HepG2 (cell line): ENCODE measurements at regions of chr20 and their contacts with region 1.

Region 1: GRCh38 chr20:50189681-50190582 is 698 bp upstream of the CEBPB start:
- DNase-seq: peak; percentile 90
- ATAC-seq: peak; percentile 53
- H3K4me3 ChIP-seq: peak overlapping the region; percentile 80 to 99 (median 95)
- H3K27ac ChIP-seq: peak overlapping the region; percentile 79
- H3K4me1 ChIP-seq: peaks cover 66% of the 10 kb centered on the region
- H3K27me3 ChIP-seq: no peaks in the 10 kb centered on the region; a peak in 1 of 5 replicates
- CTCF ChIP-seq: peak; percentile 96
- EP300 ChIP-seq: peak in 1 of 2 experiments; percentile 31; a peak in 1 of 4 replicates
- POLR2A ChIP-seq: no peak
- RAD21 ChIP-seq: peak; percentile 96

Region 2: GRCh38 chr20:50101281-50101680 is 88.7 kb before region 1 on chr20:
- CTCF ChIA-PET with region 1: no interaction called
- POLR2A ChIA-PET with region 1: no interaction called
- in situ Hi-C with region 1: no loop called
- intact Hi-C with region 1: no loop called
- DNase-seq: no peak
- ATAC-seq: peak; percentile 38; the same call in 2 of the 3 replicates
- H3K4me3 ChIP-seq: no peak overlapping the region
- H3K27ac ChIP-seq: no peak overlapping the region
- H3K4me1 ChIP-seq: peaks cover 34% of the 10 kb centered on the region
- H3K27me3 ChIP-seq: no peaks in the 10 kb centered on the region
- CTCF ChIP-seq: no peak
- EP300 ChIP-seq: no peak
- POLR2A ChIP-seq: no peak
- RAD21 ChIP-seq: no peak

Region 3: DNA sequence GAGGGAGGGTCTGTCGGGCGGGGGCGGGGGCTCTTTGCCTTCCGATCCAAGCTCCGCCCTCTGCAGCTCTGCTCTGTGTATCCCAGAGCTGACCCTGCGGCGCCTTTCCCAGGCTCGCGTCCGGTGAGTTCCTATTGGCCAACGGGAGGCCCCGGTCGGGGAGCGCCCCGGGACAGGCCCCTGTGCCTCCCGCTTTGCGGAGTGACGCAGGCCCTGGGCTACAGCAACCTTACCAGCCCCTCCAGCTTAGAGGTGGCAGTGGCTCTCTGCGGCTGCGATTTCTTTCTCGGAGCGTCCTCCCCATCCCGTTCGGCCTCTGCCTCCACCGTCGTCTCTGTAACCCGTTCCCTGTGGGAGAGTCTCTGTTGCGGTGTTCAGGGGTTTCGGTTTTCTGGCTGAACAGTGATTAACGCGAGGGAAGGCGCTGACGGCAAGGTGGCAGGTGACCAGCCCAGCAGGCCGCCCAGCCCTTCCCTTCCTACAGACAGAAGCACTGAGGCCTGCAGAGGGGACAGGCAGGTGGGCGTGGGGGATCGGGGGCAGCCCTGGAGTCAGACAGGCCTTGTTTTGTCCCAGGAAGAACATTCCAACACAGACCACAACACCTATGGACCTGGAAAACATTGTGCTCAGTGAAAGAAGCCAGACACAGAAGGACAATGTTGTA is 17.5 kb before region 1 on chr20:
- CTCF ChIA-PET with region 1: no interaction called
- POLR2A ChIA-PET with region 1: interaction called, 39 read pairs
- in situ Hi-C with region 1: no loop called
- intact Hi-C with region 1: no loop called
- DNase-seq: peak; percentile 97
- ATAC-seq: peak; percentile 96
- H3K4me3 ChIP-seq: peak overlapping the region; percentile 63 to 78 (median 64)
- H3K27ac ChIP-seq: peak overlapping the region; percentile 81
- H3K4me1 ChIP-seq: peaks cover 57% of the 10 kb centered on the region
- H3K27me3 ChIP-seq: no peaks in the 10 kb centered on the region; a peak in 1 of 5 replicates
- CTCF ChIP-seq: peak; percentile 44
- EP300 ChIP-seq: peak; percentile 45 to 58; a peak in 1 of 4 replicates
- POLR2A ChIP-seq: peak; percentile 95 to 96
- RAD21 ChIP-seq: peak; percentile 48

Region 4: GRCh38 chr20:50256577-50256976 is 66.6 kb after region 1 on chr20:
- CTCF ChIA-PET with region 1: no interaction called
- POLR2A ChIA-PET with region 1: no interaction called
- in situ Hi-C with region 1: no loop called
- intact Hi-C with region 1: no loop called
- DNase-seq: no peak
- ATAC-seq: no peak
- H3K4me3 ChIP-seq: peak overlapping the region in 1 of 3 experiments; percentile 3; a peak in 1 of 6 replicates
- H3K27ac ChIP-seq: no peak overlapping the region
- H3K4me1 ChIP-seq: peaks cover 57% of the 10 kb centered on the region
- H3K27me3 ChIP-seq: peaks cover 5 to 57% of the 10 kb centered on the region in 2 experiments; a peak in 4 of 5 replicates
- CTCF ChIP-seq: peak; percentile 43
- EP300 ChIP-seq: no peak
- POLR2A ChIP-seq: no peak
- RAD21 ChIP-seq: no peak

Region 5: GRCh38 chr20:50292324-50293243 is 102.7 kb after region 1 on chr20:
- CTCF ChIA-PET with region 1: interaction called, 3 read pairs
- POLR2A ChIA-PET with region 1: interaction called, 24 read pairs
- in situ Hi-C with region 1: no loop called
- intact Hi-C with region 1: loop called (anchors 1 kb)
- DNase-seq: peak; percentile 97
- ATAC-seq: peak; percentile 69
- H3K4me3 ChIP-seq: peak overlapping the region in 1 of 3 experiments; percentile 39; a peak in 3 of 6 replicates
- H3K27ac ChIP-seq: peak overlapping the region; percentile 77
- H3K4me1 ChIP-seq: peaks cover 68% of the 10 kb centered on the region
- H3K27me3 ChIP-seq: no peaks in the 10 kb centered on the region
- CTCF ChIP-seq: peak; percentile 41
- EP300 ChIP-seq: peak; percentile 96 to 99
- POLR2A ChIP-seq: peak in 1 of 2 experiments; percentile 14; a peak in 2 of 4 replicates
- RAD21 ChIP-seq: peak; percentile 63

Region 6: DNA sequence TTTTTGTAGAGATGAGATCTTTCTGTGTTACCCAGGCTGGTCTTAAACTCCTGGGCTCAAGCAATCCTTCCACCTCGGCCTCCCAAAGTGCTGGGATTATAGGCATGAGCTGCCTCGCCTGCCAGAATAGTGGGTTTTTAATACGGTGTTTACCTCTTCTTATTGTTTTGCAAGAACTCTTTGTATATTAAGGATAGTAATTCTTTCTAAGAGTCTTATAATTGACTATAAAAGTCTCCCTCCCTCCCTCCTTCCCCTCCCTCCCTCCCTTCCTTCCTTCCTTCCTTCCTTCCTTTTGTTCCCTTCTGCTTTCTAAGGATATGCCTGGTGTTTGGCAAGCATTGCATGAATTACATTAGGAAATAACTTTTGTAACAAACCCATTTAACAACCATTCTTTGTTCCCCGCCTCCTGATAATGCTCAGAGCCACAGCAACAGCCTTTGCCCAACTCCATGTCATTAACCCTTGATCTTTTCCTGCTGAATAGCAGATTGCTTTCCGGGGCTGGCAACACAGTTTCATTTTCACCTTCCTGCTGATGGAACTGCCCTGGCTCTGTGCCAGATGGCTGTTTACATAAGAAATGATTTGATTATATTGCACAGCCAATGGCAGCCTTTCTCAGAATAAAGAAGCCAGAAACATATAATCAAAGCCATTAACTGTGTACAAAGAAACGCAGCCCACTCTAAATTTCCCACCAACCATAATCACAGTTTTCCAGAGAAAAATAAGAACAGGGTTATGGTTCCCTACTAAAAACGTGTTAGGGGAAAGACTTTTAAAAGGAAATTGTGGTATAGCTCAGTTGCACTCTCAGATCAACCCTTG is 176.6 kb after region 1 on chr20:
- CTCF ChIA-PET with region 1: no interaction called
- POLR2A ChIA-PET with region 1: interaction called, 17 read pairs
- in situ Hi-C with region 1: no loop called
- intact Hi-C with region 1: no loop called
- DNase-seq: peak; percentile 100
- ATAC-seq: peak; percentile 77
- H3K4me3 ChIP-seq: peak overlapping the region in 2 of 3 experiments; percentile 29 to 31; a peak in 2 of 6 replicates
- H3K27ac ChIP-seq: peak overlapping the region; percentile 71
- H3K4me1 ChIP-seq: peaks cover 87% of the 10 kb centered on the region
- H3K27me3 ChIP-seq: peaks cover 0 to 12% of the 10 kb centered on the region in 2 experiments; a peak in 3 of 5 replicates
- CTCF ChIP-seq: 0 out of 2 replicates have a peak, but pooled peaks have one; percentile 11
- EP300 ChIP-seq: peak; percentile 79 to 93
- POLR2A ChIP-seq: no peak
- RAD21 ChIP-seq: peak; percentile 8; the same call in 1 of the 2 replicates

Region 7: GRCh38 chr20:50425085-50425484 is 235.2 kb after region 1 on chr20:
- CTCF ChIA-PET with region 1: no interaction called
- POLR2A ChIA-PET with region 1: interaction called, 25 read pairs
- in situ Hi-C with region 1: no loop called
- intact Hi-C with region 1: no loop called
- DNase-seq: peak; percentile 61
- ATAC-seq: peak; percentile 12; the same call in 2 of the 3 replicates
- H3K4me3 ChIP-seq: no peak overlapping the region
- H3K27ac ChIP-seq: no peak overlapping the region
- H3K4me1 ChIP-seq: peaks cover 84% of the 10 kb centered on the region
- H3K27me3 ChIP-seq: no peaks in the 10 kb centered on the region
- CTCF ChIP-seq: no peak
- EP300 ChIP-seq: no peak
- POLR2A ChIP-seq: no peak
- RAD21 ChIP-seq: no peak

Region 8: DNA sequence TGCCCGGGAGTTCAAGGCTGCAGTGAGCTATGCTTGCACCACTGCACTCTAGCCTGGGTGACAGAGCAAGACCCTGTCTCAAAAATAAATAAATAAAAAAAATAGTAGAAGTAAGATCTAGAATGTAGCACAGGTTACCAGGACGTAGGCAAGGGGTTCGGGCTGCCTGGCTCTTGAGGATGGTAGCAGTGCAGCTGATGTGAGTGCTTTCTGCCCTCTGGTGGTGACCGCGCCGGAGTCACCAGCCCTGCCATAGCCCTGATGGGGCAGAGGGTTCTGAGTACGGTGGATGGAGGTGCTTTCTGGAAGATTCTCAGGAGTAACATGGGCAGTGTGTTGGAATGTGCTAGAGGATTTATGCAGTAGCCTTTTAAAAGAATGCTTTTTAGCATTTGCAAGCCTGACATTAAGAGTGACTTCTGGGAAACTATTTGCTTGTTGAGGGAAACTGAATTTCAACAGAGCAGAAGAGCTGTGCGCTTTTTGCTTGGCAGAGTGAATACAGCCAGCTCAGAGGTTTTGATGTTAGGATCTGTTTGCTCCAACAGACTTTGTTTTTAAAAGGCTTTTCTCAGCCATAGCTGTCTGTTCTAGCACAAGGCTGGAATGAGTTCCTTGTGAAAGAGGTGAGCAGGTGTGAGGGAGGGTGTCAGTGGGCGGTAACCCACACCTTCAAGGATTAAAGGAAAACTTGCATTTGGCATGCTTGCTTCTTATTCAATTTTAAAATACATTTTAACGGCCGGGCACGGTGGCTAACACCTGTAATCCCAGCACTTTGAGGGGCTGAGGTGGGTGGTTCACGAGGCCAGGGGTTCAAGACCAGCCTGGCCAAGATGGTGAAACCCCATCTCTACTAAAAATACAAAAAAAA is 386.2 kb after region 1 on chr20:
- CTCF ChIA-PET with region 1: interaction called, 45 read pairs
- POLR2A ChIA-PET with region 1: interaction called, 8 read pairs
- in situ Hi-C with region 1: loop called (anchors 5 kb)
- intact Hi-C with region 1: loop called (anchors 1 kb)
- DNase-seq: peak; percentile 63
- ATAC-seq: peak; percentile 91
- H3K4me3 ChIP-seq: no peak overlapping the region
- H3K27ac ChIP-seq: no peak overlapping the region
- H3K4me1 ChIP-seq: peaks cover 8% of the 10 kb centered on the region
- H3K27me3 ChIP-seq: no peaks in the 10 kb centered on the region
- CTCF ChIP-seq: peak; percentile 93
- EP300 ChIP-seq: no peak
- POLR2A ChIP-seq: no peak
- RAD21 ChIP-seq: peak; percentile 88